GM10248 (cell line): ENCODE measurements at regions of chr10 and their contacts with region 1.

Region 1: GRCh38 chr10:15433850-15434537 is 62.9 kb upstream of the FAM171A1 start:
- DNase-seq: peak; percentile 59
- CTCF ChIP-seq: peak; percentile 51

Region 2: GRCh38 chr10:15448598-15448997 is 14.6 kb after region 1 on chr10:
- CTCF ChIA-PET with region 1: interaction called, 12 read pairs
- POLR2A ChIA-PET with region 1: no interaction called
- DNase-seq: no peak
- CTCF ChIP-seq: no peak